Activated T-helper 1 cell treated with anti-CD3 and anti-CD28 coated beads, Interleukin-12 subunit alpha, Interleukin-12 subunit beta, Interleukin-2, Interleukin-4 antibody, amounts not matched to agents 30 ng/mL and 10 ng/mL and 1 ng/mL, durations not matched to agents 14 hours and 24 hours and 36 hours (primary cell): ENCODE measurements at regions of chr2 and their contacts with region 1.

Region 1: DNA sequence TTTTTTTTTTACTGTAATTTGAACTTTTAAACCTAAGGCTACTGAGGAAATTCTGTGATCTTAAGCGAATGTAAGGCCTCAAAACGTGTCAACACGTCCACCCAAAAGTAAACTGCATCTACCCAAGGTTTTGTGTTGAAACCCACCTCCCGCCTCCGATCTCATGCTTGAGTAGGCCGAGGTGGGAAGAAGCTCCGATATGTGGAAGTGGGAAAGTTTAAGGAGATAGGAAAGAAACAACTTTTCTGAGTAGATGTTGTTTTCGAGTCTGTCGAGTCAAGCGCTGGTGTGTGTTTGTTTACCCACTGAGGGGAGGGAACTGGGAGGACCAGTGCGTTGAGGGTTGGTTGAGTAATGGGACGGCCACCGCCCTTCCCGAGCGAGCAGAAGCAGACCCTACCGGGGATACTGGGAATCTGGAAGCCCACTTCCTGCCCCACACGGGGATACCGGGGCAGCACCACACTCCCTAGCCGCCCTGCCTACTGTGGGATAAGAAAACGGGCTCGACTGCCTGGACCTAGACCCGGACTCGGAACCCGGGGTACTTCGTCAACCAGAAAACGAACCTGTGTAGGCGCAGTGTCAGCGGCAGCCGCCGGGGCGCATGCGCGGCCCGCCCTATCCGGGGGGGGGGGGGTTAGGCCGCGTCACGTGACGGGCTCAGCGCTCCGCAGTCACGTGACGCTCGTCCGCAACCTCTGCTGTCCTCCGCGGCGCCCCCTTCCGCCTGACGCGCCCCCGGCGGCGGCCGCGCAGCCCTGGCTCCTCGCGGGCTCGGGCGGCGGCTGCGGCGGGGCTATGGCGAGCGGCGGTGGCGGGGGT is at the start of gene RETREG2:
- DNase-seq: peak; percentile 74
- H3K4me3 Mint-ChIP-seq: peak within 1 kb of the TSS; percentile 91
- H3K27ac Mint-ChIP-seq: peak within 1 kb of the TSS; percentile 96
- H3K4me1 Mint-ChIP-seq: peaks cover 72% of the 10 kb centered on the region
- H3K27me3 Mint-ChIP-seq: no peaks in the 10 kb centered on the region
- total RNA-seq, gene RETREG2: 58.4 and 61.5 TPM in 2 replicates

Region 2: DNA sequence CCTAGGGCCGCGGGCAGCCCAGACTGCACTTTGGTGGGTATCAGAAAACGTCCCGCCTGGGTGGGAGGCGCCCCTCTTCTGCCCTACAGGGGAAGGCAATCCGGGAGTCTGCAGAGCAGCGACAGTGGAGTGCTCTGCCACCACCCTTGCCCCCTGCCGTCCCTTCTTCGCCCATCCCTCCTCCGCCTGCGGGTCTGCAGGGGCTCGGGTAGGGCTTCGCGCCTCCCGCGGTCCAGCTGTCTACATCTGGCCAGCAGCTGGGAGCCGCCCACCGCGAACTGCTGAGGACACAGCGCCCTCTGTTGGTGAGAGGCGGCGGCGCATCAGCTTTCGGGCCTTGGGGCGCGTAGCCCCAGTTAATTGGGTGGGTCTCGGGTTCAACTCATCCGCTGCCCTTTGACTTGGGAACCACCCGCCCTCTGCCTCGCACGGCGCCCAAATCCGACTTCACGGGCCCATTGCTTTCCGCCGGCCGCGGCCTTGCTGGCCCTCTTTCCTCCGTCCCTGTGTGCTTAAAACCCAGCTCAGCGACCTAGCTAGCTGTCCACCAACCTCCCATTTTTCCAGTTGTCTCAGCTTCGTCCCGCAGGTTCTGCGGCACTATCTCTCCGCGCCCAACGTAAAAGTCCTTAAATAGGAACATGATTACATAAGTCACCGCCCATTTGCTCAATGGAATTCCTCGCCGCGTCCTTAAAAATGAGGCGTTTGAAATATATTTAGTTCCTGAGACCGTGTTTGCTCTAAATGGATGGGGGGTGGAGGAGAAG is 279.5 kb before region 1 on chr2:
- intact Hi-C with region 1: loop called (anchors 2 kb)
- DNase-seq: peak; percentile 71
- H3K4me3 Mint-ChIP-seq: peak overlapping the region; percentile 73
- H3K27ac Mint-ChIP-seq: peak overlapping the region; percentile 86
- H3K4me1 Mint-ChIP-seq: peaks cover 42% of the 10 kb centered on the region
- H3K27me3 Mint-ChIP-seq: peaks cover 56% of the 10 kb centered on the region

Region 3: GRCh38 chr2:219218732-219219701 is 41.3 kb after region 1 on chr2 and contains the start of gene ABCB6:
- intact Hi-C with region 1: loop called (anchors 1 kb)
- DNase-seq: peak; percentile 86
- H3K4me3 Mint-ChIP-seq: peak within 1 kb of the TSS; percentile 87
- H3K27ac Mint-ChIP-seq: peak within 1 kb of the TSS; percentile 86
- H3K4me1 Mint-ChIP-seq: peaks cover 23% of the 10 kb centered on the region
- H3K27me3 Mint-ChIP-seq: no peaks in the 10 kb centered on the region
- total RNA-seq, gene ABCB6: 31.9 and 32.9 TPM in 2 replicates

Region 4: DNA sequence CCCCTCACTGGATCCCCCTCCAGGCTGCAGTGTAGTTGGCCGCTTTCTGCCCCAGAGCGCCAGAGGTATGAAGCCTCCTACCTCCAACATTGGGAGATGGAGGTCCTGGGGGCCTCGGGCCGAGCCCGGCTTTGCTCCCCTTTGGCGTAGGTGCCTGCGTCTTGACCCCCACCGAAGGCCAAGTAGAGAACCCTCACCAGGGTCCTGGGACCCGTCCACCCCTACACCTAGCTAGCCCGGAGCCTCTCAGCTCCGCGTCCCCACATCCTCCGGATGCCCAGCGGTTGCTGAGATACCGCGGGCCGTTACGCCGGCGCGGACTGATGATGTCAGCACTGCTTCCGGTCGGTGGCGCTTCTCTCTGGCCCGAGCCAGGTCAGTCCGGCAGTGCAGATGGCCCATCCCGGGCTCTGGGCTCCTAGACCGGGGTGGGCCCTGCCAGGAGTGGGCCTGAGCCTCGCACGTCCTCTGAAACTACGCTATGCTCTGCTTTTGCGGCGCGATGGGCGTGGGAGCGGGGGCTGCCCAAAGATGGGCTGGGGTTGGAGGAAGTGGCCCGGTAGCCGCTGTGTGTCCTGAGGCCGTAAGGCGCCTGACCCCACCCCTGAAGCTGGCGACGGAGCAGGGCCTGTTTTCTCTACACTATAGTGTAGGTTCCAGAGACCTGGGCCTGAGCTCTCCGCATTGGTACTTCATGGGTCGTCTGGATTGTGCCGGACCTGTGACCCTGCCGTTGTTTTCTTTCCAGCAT is 67.6 kb after region 1 on chr2 and contains the starts of genes GLB1L and STK16:
- intact Hi-C with region 1: loop called (anchors 1 kb)
- DNase-seq: peak; percentile 89
- H3K4me3 Mint-ChIP-seq: peak within 1 kb of the TSS; percentile 99
- H3K27ac Mint-ChIP-seq: peak within 1 kb of the TSS; percentile 99
- H3K4me1 Mint-ChIP-seq: peaks cover 57% of the 10 kb centered on the region
- H3K27me3 Mint-ChIP-seq: no peaks in the 10 kb centered on the region
- total RNA-seq, gene GLB1L: 4.6 and 4.9 TPM in 2 replicates
- total RNA-seq, gene STK16: 30.1 and 30.6 TPM in 2 replicates

Region 5: GRCh38 chr2:219278655-219279516 is 101.1 kb after region 1 on chr2 and contains the start of gene DNAJB2:
- intact Hi-C with region 1: loop called (anchors 1 kb)
- DNase-seq: peak; percentile 99
- H3K4me3 Mint-ChIP-seq: peak within 1 kb of the TSS; percentile 94
- H3K27ac Mint-ChIP-seq: peak within 1 kb of the TSS; percentile 99
- H3K4me1 Mint-ChIP-seq: peaks cover 45% of the 10 kb centered on the region
- H3K27me3 Mint-ChIP-seq: peaks cover under 1% of the 10 kb centered on the region
- total RNA-seq, gene DNAJB2: 40.8 and 45.3 TPM in 2 replicates